PC-9 (cell line): ENCODE measurements at regions of chr18 and their contacts with region 1.

Region 1: GRCh38 chr18:23422672-23423418 is 30.2 kb upstream of the RIOK3 start:
- DNase-seq: peak; percentile 88 to 99
- H3K4me3 ChIP-seq: peak overlapping the region; percentile 26; the same call in 1 of the 2 replicates
- H3K27ac ChIP-seq: peak overlapping the region; percentile 68
- H3K4me1 ChIP-seq: peaks cover 43% of the 10 kb centered on the region
- H3K27me3 ChIP-seq: no peaks in the 10 kb centered on the region
- CTCF ChIP-seq: no peak

Region 2: GRCh38 chr18:23452728-23453679 is 30.2 kb after region 1 on chr18 and contains the start of gene RIOK3:
- CTCF ChIA-PET with region 1: no interaction called
- POLR2A ChIA-PET with region 1: no interaction called
- intact Hi-C with region 1: loop called (anchors 1 kb)
- DNase-seq: peak; percentile 93 to 95
- H3K4me3 ChIP-seq: peak within 1 kb of the TSS; percentile 97
- H3K27ac ChIP-seq: peak within 1 kb of the TSS; percentile 94
- H3K4me1 ChIP-seq: peaks cover 23% of the 10 kb centered on the region
- H3K27me3 ChIP-seq: no peaks in the 10 kb centered on the region
- CTCF ChIP-seq: no peak
- total RNA-seq, gene RIOK3: 34.1 and 39.9 TPM in 2 replicates